ENCODE measurements at regions of chr22 and their contacts with region 1.

Region 1: DNA sequence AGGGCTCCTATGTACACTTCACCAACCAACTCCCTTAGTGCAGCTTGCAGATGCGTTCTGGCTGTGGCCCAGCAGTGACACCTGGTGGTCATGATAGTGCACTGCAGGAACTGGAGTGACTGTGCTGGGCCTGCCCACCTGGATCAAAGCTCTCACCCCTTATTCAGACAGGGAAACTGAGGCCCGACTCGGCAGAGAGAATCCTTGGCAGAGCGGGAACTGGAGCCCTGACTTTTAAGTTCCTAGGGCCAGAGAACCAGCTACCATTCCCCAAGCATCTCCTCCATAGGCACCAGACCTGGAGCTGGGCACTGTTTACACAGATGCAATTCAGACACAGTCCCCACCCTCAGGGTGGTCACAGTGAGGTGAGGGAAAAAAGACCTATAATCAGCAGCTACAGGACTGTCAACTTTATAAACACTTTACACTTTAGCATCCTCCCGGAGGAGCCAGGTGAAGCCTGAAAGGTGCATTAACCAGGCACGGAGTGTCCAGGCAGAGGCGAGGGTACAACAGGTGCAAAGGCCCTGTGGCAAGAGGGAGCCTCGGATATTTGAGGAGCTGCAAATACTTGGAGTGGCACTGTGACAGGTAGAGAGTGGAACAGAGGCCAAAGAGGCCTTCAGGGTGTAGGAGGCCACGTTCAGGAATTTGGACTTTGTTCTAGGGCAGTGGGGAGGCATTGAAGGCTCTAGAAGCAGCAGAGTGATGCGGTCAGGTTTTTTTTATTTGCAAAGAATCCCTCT is 22.0 kb downstream of the RHBDD3 start:
- DNase-seq: peak; percentile 80
- ATAC-seq: peak; percentile 95
- H3K4me3 Mint-ChIP-seq: no peak overlapping the region
- H3K27ac Mint-ChIP-seq: no peak overlapping the region
- H3K4me1 Mint-ChIP-seq: no peaks in the 10 kb centered on the region
- H3K27me3 Mint-ChIP-seq: peaks cover 16% of the 10 kb centered on the region
- CTCF ChIP-seq: peak; percentile 99

Region 2: DNA sequence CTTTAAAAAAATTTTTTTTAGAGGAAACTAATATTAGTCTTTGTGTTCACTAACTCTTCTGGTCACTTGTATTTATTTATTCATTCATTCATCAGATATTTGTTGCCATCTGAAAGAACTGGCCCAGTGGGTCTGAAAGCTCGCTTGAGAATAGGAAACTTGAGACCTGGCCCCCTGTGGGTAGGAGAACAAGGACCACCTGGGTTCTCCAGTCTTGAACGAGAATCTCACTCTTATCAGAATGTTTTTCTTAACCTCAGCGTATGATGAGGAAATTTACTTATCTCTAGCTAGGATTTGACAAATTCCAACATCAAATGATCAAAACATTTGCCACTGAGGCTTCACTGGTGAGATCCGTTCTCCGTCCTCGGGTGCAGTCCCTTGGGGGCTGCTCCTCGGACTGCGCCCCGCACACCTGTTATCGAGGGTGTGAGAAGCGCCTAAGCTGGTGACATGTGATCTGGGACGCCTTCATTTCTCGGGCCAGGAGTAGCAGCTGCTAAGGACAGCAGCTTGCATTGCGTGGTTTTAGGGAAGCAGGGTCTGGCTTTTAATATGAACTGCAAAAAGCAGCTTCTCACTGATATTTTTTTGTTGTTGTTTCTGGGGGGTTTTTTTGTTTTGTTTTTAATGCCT is 190.5 kb before region 1 on chr22:
- CTCF ChIA-PET with region 1: interaction called, 11 read pairs
- POLR2A ChIA-PET with region 1: interaction called, 3 read pairs
- DNase-seq: peak; percentile 34
- ATAC-seq: peak; percentile 46
- H3K4me3 Mint-ChIP-seq: peak overlapping the region; percentile 24
- H3K27ac Mint-ChIP-seq: peak overlapping the region; percentile 52
- H3K4me1 Mint-ChIP-seq: peaks cover 41% of the 10 kb centered on the region
- H3K27me3 Mint-ChIP-seq: no peaks in the 10 kb centered on the region
- CTCF ChIP-seq: no peak

Region 3: DNA sequence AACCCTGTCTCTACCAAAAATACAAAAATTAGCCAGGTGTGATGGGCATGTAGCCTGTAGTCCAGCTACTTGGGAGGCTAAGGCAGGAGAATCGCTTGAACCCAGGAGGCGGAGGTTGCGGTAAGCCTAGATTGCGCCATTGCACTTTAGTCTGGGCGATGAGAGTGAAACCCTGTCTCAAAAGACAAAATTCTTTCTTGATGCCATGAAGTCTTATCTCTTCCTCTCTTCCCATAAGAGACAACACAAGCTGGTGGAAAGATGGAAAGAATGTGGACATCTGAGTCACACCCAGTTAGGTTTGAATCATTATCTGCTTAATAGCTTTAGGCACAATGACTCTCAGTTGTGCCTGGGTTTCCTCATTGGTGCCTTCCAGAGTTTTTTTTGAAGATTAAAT is 137.7 kb before region 1 on chr22:
- CTCF ChIA-PET with region 1: interaction called, 12 read pairs
- POLR2A ChIA-PET with region 1: no interaction called
- DNase-seq: no peak
- ATAC-seq: no peak
- H3K4me3 Mint-ChIP-seq: no peak overlapping the region
- H3K27ac Mint-ChIP-seq: no peak overlapping the region
- H3K4me1 Mint-ChIP-seq: peaks cover 7% of the 10 kb centered on the region; the same call in 1 of the 2 replicates
- H3K27me3 Mint-ChIP-seq: no peaks in the 10 kb centered on the region
- CTCF ChIP-seq: no peak

Region 4: GRCh38 chr22:29202212-29203192 is 43.3 kb before region 1 on chr22:
- CTCF ChIA-PET with region 1: interaction called, 171 read pairs
- POLR2A ChIA-PET with region 1: interaction called, 4 read pairs
- DNase-seq: peak; percentile 59
- ATAC-seq: peak; percentile 49
- H3K4me3 Mint-ChIP-seq: no peak overlapping the region
- H3K27ac Mint-ChIP-seq: no peak overlapping the region
- H3K4me1 Mint-ChIP-seq: peaks cover 13% of the 10 kb centered on the region
- H3K27me3 Mint-ChIP-seq: peaks cover 9% of the 10 kb centered on the region
- CTCF ChIP-seq: no peak

Region 5: DNA sequence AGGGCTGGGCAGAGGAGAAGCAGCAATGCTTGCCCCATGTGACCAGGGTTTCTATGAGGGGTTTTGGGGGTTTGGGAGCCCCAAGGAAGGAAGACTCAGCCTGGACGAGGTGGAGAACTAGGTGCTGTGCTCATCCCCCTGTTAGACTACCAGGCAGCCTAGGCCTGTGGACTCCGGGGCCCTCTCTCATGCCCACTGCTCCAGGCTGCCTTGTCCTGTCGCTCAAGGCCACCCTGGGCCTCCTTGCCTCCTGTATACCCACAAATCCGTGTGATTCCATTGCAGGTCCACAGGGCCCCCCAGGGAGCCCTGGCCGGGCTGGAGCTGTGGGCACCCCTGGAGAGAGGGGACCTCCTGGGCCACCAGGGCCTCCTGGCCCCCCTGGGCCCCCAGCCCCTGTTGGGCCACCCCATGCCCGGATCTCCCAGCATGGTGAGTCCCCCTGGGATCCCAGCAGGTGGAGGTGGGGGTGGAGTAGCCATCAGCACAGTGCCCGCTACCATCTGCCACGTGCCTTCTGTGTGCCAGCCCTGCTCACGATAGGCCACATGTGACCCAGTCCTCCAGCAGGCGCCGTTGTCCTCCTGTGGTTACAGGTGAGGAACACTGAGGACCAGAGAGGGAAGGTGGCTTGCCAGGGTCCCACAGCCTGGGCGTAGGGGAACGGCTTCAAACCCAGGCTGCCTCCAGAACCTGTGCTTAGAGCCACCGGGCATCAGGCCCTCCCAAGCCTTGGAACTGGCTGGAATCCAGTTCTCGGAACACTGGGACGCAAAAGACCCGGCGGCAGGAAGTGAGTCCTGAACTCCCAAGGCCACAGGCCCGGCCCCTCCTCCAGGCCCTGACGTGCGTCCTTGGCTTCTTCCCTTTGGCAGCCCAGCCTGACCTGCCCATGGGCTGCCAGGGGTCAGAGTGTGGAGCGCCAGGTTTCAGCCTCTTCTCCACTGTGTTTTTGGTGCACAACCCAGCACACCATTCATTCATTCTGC is 13.5 kb before region 1 on chr22:
- CTCF ChIA-PET with region 1: interaction called, 26 read pairs
- POLR2A ChIA-PET with region 1: no interaction called
- DNase-seq: no peak
- ATAC-seq: no peak
- H3K4me3 Mint-ChIP-seq: no peak overlapping the region
- H3K27ac Mint-ChIP-seq: no peak overlapping the region
- H3K4me1 Mint-ChIP-seq: no peaks in the 10 kb centered on the region
- H3K27me3 Mint-ChIP-seq: peaks cover 9% of the 10 kb centered on the region
- CTCF ChIP-seq: no peak